ENCODE measurements at regions of chr19 and their contacts with region 1.

Region 1: DNA sequence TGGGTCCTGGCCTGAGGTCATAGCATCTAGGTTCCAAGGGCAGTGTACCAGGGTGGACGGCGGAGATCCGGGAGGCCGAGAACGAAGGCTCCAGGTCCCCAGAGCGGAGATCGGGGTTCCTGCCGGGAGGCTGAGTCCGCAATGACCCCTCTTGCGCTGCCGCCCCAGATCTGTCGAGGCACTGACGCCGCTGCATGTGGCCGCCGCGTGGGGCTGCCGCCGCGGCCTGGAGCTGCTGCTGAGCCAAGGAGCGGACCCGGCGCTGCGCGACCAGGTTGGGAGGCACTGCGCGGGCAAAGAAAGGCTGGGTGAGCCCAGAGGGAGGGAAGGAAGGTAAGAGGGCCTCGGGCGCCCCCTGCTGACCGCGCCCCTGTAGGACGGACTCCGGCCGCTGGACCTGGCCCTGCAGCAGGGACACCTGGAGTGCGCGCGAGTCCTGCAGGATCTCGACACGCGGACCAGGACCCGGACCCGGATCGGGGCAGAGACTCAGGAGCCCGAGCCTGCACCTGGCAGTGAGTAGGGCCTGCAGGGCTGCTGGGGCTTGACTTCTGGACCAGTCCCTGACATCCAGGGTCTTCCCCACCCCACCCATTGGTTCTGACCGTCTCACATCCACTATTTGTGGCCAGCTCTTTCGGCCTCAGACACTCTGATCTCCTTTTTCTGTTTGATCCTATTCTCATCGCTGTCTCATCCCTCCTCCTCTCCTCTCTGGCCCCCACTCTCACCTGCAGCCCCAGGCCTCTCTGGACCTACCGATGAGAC is 971 bp downstream of the ANKLE1 start:
- DNase-seq: peak; percentile 46
- ATAC-seq: peak; percentile 92
- H3K4me3 ChIP-seq: peak overlapping the region; percentile 85
- H3K27ac ChIP-seq: peak overlapping the region; percentile 68
- H3K4me1 ChIP-seq: peaks cover 9% of the 10 kb centered on the region
- H3K27me3 ChIP-seq: no peaks in the 10 kb centered on the region
- CTCF ChIP-seq: peak; percentile 90 to 96 (median 94); a peak in 5 of 6 replicates
- EP300 ChIP-seq: no peak
- POLR2A ChIP-seq: peak; percentile 58
- RAD21 ChIP-seq: peak; percentile 79

Region 2: GRCh38 chr19:17205237-17206140 is 77.2 kb before region 1 on chr19:
- CTCF ChIA-PET with region 1: interaction called, 10 read pairs
- POLR2A ChIA-PET with region 1: no interaction called
- RAD21 ChIA-PET with region 1: no interaction called
- SMC1A ChIA-PET with region 1: no interaction called
- in situ Hi-C with region 1: no loop called
- intact Hi-C with region 1: loop called (anchors 1 kb)
- DNase-seq: no peak
- ATAC-seq: peak; percentile 77
- H3K4me3 ChIP-seq: no peak overlapping the region
- H3K27ac ChIP-seq: no peak overlapping the region
- H3K4me1 ChIP-seq: no peaks in the 10 kb centered on the region
- H3K27me3 ChIP-seq: no peaks in the 10 kb centered on the region
- CTCF ChIP-seq: peak; percentile 57 to 73 (median 71)
- EP300 ChIP-seq: no peak
- POLR2A ChIP-seq: peak; percentile 60
- RAD21 ChIP-seq: peak; percentile 33